Naive thymus-derived CD8-positive, alpha-beta T cell (primary cell): ENCODE measurements at regions of chr22 and their contacts with region 1.

Region 1: GRCh38 chr22:39435616-39436015 is 21.2 kb upstream of the MGAT3 start:
- DNase-seq: no peak
- ATAC-seq: no peak
- H3K4me3 Mint-ChIP-seq: no peak overlapping the region
- H3K27ac Mint-ChIP-seq: no peak overlapping the region
- H3K4me1 Mint-ChIP-seq: peaks cover 5 to 20% (median 19%) of the 10 kb centered on the region in 4 donors
- H3K27me3 Mint-ChIP-seq: peaks cover 0 to 9% (median 4%) of the 10 kb centered on the region in 5 donors

Region 2: GRCh38 chr22:39414886-39415285 is 20.7 kb before region 1 on chr22:
- POLR2A ChIA-PET with region 1: interaction called, 12 read pairs
- DNase-seq: no peak
- ATAC-seq: no peak
- H3K4me3 Mint-ChIP-seq: peak overlapping the region in 9 of 10 donors; percentile 58 to 86 (median 75)
- H3K27ac Mint-ChIP-seq: peak overlapping the region; percentile 72 to 95 (median 82)
- H3K4me1 Mint-ChIP-seq: peaks cover 37 to 87% (median 66%) of the 10 kb centered on the region in 4 donors
- H3K27me3 Mint-ChIP-seq: no peaks in the 10 kb centered on the region

Region 3: DNA sequence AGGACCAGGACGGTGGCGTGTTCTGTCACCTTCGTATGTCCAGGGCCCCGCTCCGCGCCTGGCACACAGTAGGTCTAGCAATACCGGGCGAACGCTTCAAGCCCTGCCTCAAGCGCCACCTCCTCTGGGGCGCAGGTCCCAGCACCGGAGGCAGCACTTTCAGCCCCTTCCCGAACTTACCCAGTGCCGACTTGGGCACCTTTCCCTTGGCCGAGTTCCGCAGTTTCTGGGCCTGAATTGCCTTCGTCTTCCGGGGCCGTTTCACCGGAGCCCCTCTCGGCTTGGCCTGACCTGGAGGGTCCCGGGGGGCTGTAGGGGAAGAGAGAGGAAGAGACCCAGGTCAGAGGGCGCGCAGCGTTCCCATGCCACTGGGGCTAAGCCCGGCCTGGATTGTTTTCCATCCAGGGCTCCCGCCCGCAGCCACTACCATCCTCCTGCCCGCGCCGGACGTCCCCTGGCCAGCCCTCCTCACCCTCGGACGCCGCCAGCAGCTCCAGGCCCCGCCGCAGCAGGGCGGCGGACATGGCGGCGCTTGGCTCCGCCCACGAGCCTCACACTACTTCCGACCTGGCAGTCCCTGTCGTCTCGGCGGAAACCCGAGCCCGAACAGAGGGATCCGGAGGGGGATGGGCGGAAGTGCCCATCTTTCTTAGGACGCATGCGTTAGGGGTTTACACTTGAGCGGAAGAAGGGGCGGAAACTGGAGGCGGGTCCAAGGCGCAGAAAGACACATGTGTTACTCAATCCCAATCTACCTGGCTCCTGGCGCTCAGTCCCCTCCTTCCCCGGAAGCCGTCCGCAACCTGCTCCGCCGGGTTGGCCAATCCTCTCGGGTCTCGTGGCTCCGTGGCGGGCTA is 96.8 kb after region 1 on chr22 and contains the start of gene RPS19BP1:
- POLR2A ChIA-PET with region 1: no interaction called
- DNase-seq: peak; percentile 93 to 100 (median 99)
- ATAC-seq: peak; percentile 87 to 88
- H3K4me3 Mint-ChIP-seq: peak within 1 kb of the TSS; percentile 90 to 99 (median 97)
- H3K27ac Mint-ChIP-seq: peak within 1 kb of the TSS; percentile 89 to 98 (median 96)
- H3K4me1 Mint-ChIP-seq: peaks cover 27 to 63% (median 56%) of the 10 kb centered on the region in 4 donors
- H3K27me3 Mint-ChIP-seq: peaks cover 0 to 1% (median 0%) of the 10 kb centered on the region in 5 donors
- polyA plus RNA-seq, gene RPS19BP1: 122 to 129 (median 128) TPM